CD4-positive, alpha-beta T cell (primary cell): ENCODE measurements at regions of chr10 and their contacts with region 1.

Region 1: DNA sequence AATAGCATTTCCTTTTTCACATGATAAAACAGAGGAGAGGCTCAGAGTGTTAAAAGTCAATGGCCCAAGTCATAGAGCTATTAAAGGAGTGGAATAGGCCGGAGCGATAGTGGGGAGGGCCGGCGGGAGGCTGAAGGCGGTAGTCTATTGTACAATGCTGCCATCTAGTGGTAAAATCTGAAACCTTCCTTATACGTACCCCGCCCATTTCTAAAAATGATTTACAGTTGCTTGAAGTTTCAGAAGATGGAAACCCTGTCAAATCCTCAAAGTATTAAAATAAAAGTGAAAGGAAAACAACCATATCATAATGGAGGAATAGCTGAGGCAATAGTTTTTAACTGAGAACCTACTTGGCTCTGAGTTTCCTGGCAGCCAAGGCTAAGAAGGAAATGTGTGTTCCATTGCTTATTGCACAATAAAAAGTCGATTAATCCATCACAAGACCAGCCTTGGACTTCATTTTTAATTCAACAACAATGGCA is 209.1 kb downstream of the CCSER2 start:
- DNase-seq: peak in 6 of 14 experiments; percentile 11 to 80 (median 52)
- ATAC-seq: peak; percentile 67
- H3K4me3 ChIP-seq: no peak overlapping the region
- H3K4me3 Mint-ChIP-seq: no peak overlapping the region
- H3K27ac ChIP-seq: no peak overlapping the region
- H3K27ac Mint-ChIP-seq: no peak overlapping the region
- H3K4me1 ChIP-seq: peaks cover 14% of the 10 kb centered on the region
- H3K4me1 Mint-ChIP-seq: peaks cover 11% of the 10 kb centered on the region
- H3K27me3 ChIP-seq: peaks cover 11 to 18% of the 10 kb centered on the region in 2 experiments
- H3K27me3 Mint-ChIP-seq: peaks cover 39% of the 10 kb centered on the region
- CTCF ChIP-seq: peak; percentile 96

Region 2: DNA sequence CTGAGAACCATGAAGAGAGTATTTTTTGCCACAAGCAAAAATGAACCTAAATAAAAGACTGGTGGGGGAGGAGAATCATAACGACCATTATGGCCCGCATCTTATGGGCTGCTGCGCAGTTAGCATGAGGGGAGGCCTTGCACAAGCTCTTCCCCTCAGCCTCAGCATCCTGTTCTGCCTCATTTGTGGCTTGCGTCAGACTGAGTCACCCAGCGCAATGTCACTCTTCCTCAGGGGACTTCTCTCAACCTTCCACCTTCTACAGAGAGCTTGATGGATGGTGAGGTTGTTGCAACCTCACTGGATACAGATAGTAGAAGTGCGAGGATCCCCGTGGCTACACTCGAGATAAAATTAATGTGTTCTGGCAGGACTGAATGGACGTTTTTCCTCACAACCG is 380.7 kb before region 1 on chr10:
- CTCF ChIA-PET with region 1: no interaction called
- POLR2A ChIA-PET with region 1: no interaction called
- intact Hi-C with region 1: loop called in 1 of 2 experiments (anchors 10 kb)
- DNase-seq: peak in 5 of 14 experiments; percentile 22 to 69 (median 53)
- ATAC-seq: peak; percentile 86
- H3K4me3 ChIP-seq: no peak overlapping the region
- H3K4me3 Mint-ChIP-seq: no peak overlapping the region
- H3K27ac ChIP-seq: no peak overlapping the region
- H3K27ac Mint-ChIP-seq: peak overlapping the region; percentile 79
- H3K4me1 ChIP-seq: peaks cover 3% of the 10 kb centered on the region
- H3K4me1 Mint-ChIP-seq: peaks cover 19% of the 10 kb centered on the region
- H3K27me3 ChIP-seq: no peaks in the 10 kb centered on the region
- H3K27me3 Mint-ChIP-seq: no peaks in the 10 kb centered on the region
- CTCF ChIP-seq: no peak

Region 3: DNA sequence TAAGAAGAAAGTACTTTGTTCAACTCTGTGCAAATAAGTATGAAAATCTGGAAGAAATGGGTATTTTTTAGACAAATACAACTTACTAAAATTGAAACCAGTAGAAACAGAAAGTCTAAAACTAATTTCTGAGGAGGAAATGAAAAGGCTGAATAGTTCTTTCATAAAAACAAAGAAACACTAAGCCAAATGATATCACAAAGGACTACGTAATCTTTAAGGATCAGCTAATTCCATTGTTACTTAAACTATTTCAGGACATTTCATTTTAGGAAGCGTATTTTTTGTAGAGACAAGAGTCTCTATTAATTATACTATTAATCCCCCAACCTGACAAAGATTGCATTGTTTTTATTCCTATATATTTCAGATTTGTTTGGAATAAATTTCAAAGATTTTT is 220.3 kb before region 1 on chr10:
- CTCF ChIA-PET with region 1: no interaction called
- POLR2A ChIA-PET with region 1: no interaction called
- intact Hi-C with region 1: no loop called
- DNase-seq: no peak
- ATAC-seq: no peak
- H3K4me3 ChIP-seq: no peak overlapping the region
- H3K4me3 Mint-ChIP-seq: no peak overlapping the region
- H3K27ac ChIP-seq: no peak overlapping the region
- H3K27ac Mint-ChIP-seq: no peak overlapping the region
- H3K4me1 ChIP-seq: no peaks in the 10 kb centered on the region
- H3K4me1 Mint-ChIP-seq: no peaks in the 10 kb centered on the region
- H3K27me3 ChIP-seq: no peaks in the 10 kb centered on the region
- H3K27me3 Mint-ChIP-seq: no peaks in the 10 kb centered on the region
- CTCF ChIP-seq: no peak

Region 4: GRCh38 chr10:84352251-84352842 is 185.1 kb before region 1 on chr10:
- CTCF ChIA-PET with region 1: interaction called, 7 read pairs
- POLR2A ChIA-PET with region 1: interaction called, 4 read pairs
- intact Hi-C with region 1: loop called in 1 of 2 experiments (anchors 1 kb)
- DNase-seq: peak; percentile 45 to 84 (median 62)
- ATAC-seq: peak; percentile 90
- H3K4me3 ChIP-seq: no peak overlapping the region
- H3K4me3 Mint-ChIP-seq: no peak overlapping the region
- H3K27ac ChIP-seq: no peak overlapping the region
- H3K27ac Mint-ChIP-seq: peak overlapping the region; percentile 30
- H3K4me1 ChIP-seq: peaks cover 30% of the 10 kb centered on the region
- H3K4me1 Mint-ChIP-seq: peaks cover 81% of the 10 kb centered on the region
- H3K27me3 ChIP-seq: no peaks in the 10 kb centered on the region
- H3K27me3 Mint-ChIP-seq: no peaks in the 10 kb centered on the region
- CTCF ChIP-seq: peak; percentile 70

Region 5: GRCh38 chr10:84375011-84375410 is 162.5 kb before region 1 on chr10:
- CTCF ChIA-PET with region 1: interaction called, 6 read pairs
- POLR2A ChIA-PET with region 1: no interaction called
- intact Hi-C with region 1: loop called (anchors 1 kb)
- DNase-seq: peak in 9 of 14 experiments; percentile 7 to 79 (median 31)
- ATAC-seq: peak; percentile 76
- H3K4me3 ChIP-seq: no peak overlapping the region
- H3K4me3 Mint-ChIP-seq: no peak overlapping the region
- H3K27ac ChIP-seq: no peak overlapping the region
- H3K27ac Mint-ChIP-seq: no peak overlapping the region
- H3K4me1 ChIP-seq: no peaks in the 10 kb centered on the region
- H3K4me1 Mint-ChIP-seq: peaks cover 63% of the 10 kb centered on the region
- H3K27me3 ChIP-seq: no peaks in the 10 kb centered on the region
- H3K27me3 Mint-ChIP-seq: no peaks in the 10 kb centered on the region
- CTCF ChIP-seq: peak; percentile 89

Region 6: GRCh38 chr10:84523526-84523925 is 14.0 kb before region 1 on chr10:
- CTCF ChIA-PET with region 1: no interaction called
- POLR2A ChIA-PET with region 1: no interaction called
- intact Hi-C with region 1: no loop called
- DNase-seq: peak in 2 of 14 experiments; percentile 26 to 37
- ATAC-seq: no peak
- H3K4me3 ChIP-seq: no peak overlapping the region
- H3K4me3 Mint-ChIP-seq: no peak overlapping the region
- H3K27ac ChIP-seq: no peak overlapping the region
- H3K27ac Mint-ChIP-seq: no peak overlapping the region
- H3K4me1 ChIP-seq: peaks cover 3% of the 10 kb centered on the region
- H3K4me1 Mint-ChIP-seq: peaks cover 9% of the 10 kb centered on the region
- H3K27me3 ChIP-seq: no peaks in the 10 kb centered on the region
- H3K27me3 Mint-ChIP-seq: no peaks in the 10 kb centered on the region
- CTCF ChIP-seq: no peak